PC-9 (cell line): ENCODE measurements at regions of chr21 and their contacts with region 1.

Region 1: GRCh38 chr21:20802631-20803260 is 195.5 kb upstream of the NCAM2 start:
- DNase-seq: no peak
- H3K4me3 ChIP-seq: no peak overlapping the region
- H3K27ac ChIP-seq: no peak overlapping the region
- H3K4me1 ChIP-seq: no peaks in the 10 kb centered on the region
- H3K27me3 ChIP-seq: no peaks in the 10 kb centered on the region
- CTCF ChIP-seq: no peak

Region 2: GRCh38 chr21:20617130-20617529 is 185.6 kb before region 1 on chr21:
- CTCF ChIA-PET with region 1: no interaction called
- POLR2A ChIA-PET with region 1: no interaction called
- intact Hi-C with region 1: loop called (anchors 10 kb)
- DNase-seq: no peak
- H3K4me3 ChIP-seq: no peak overlapping the region
- H3K27ac ChIP-seq: no peak overlapping the region
- H3K4me1 ChIP-seq: no peaks in the 10 kb centered on the region
- H3K27me3 ChIP-seq: no peaks in the 10 kb centered on the region
- CTCF ChIP-seq: no peak

Region 3: GRCh38 chr21:20729376-20729775 is 73.4 kb before region 1 on chr21:
- CTCF ChIA-PET with region 1: no interaction called
- POLR2A ChIA-PET with region 1: no interaction called
- intact Hi-C with region 1: no loop called
- DNase-seq: peak in 1 of 2 experiments; percentile 10
- H3K4me3 ChIP-seq: no peak overlapping the region
- H3K27ac ChIP-seq: no peak overlapping the region
- H3K4me1 ChIP-seq: no peaks in the 10 kb centered on the region
- H3K27me3 ChIP-seq: no peaks in the 10 kb centered on the region
- CTCF ChIP-seq: no peak